Esophagus squamous epithelium (tissue), 5 donors: ENCODE measurements at regions of chr19 and their contacts with region 1.

Region 1: DNA sequence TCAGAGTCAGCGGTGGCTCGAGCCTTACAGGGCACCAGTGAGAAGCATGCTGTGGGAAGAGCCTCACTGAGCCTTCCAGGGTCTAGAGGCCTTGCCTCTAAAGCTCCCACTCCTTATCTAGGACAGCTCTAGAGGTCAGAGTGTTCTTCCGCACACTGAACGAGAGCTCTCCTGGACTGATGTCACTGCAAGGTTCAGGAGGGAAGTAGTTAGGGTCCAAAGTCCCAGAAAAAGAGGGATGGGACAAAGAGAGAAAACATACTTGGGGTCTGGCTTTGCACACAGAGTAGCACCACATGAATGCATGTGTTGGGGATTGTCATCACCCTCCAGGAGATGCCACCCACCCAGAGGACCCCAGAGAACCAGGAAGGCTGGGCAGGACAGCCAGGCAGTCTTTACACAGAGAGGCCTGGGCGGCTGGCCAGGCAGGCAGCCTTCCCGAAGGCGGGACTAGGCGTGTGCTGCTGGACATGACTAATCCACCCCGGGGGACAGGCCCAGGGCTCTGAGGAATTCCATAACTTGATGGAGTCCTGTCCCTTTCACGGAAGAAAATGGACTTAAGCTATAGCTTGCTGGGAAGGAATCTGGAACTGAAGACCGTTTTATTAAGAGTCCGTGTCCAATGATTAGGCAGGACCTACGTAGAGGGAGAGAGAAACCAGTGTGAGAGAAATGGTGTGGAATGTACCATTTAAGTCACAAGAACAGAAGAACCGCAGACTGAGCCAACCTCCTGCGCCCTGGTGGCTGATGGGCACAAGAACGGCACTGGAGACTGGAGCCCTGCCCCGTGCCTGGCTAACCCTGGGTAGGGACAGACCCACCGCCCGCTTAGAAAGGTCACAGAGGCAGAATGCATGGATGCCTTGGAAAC is 16.6 kb upstream of the EPHX3 start:
- DNase-seq: no peak
- H3K4me3 ChIP-seq: no peak overlapping the region
- H3K27ac ChIP-seq: peak overlapping the region; percentile 66 to 93 (median 88)
- H3K4me1 ChIP-seq: peaks cover 38 to 81% (median 61%) of the 10 kb centered on the region in 3 donors
- H3K27me3 ChIP-seq: no peaks in the 10 kb centered on the region
- CTCF ChIP-seq: no peak
- POLR2A ChIP-seq: no peak

Region 2: DNA sequence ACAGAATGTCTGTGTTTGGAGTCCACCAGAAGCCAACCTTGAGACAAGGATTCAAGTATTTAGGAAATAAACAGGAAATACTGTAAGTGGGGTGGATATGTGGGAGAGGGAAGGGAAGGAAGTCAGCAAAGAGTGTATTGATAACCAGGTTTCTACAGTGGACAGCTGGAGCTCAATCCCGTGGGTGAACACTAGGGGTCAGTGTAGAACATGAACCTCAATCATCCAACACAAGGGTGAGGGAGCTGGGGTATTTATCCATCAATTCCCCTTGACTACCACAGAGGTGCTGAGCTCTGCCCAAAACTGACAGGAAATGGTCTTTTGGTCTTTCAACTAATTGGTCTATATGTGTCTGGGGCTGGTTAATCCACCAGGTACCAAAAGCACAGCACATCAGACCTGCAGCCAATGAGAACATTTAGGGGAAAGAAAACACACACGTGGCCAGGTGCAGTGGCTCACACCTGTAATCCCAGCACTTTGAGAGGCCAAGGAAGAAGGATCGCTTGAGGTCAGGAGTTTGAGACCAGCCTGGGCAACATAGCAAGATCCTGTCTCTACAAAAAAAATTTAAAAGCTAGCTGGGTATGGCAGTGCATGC is 147.3 kb before region 1 on chr19:
- intact Hi-C with region 1: loop called (anchors 10 kb)
- DNase-seq: no peak
- H3K4me3 ChIP-seq: no peak overlapping the region
- H3K27ac ChIP-seq: no peak overlapping the region
- H3K4me1 ChIP-seq: peaks cover 2 to 17% (median 4%) of the 10 kb centered on the region in 3 donors
- H3K27me3 ChIP-seq: no peaks in the 10 kb centered on the region
- CTCF ChIP-seq: peak in 5 of 6 experiments; percentile 49 to 81 (median 66)
- POLR2A ChIP-seq: no peak

Region 3: DNA sequence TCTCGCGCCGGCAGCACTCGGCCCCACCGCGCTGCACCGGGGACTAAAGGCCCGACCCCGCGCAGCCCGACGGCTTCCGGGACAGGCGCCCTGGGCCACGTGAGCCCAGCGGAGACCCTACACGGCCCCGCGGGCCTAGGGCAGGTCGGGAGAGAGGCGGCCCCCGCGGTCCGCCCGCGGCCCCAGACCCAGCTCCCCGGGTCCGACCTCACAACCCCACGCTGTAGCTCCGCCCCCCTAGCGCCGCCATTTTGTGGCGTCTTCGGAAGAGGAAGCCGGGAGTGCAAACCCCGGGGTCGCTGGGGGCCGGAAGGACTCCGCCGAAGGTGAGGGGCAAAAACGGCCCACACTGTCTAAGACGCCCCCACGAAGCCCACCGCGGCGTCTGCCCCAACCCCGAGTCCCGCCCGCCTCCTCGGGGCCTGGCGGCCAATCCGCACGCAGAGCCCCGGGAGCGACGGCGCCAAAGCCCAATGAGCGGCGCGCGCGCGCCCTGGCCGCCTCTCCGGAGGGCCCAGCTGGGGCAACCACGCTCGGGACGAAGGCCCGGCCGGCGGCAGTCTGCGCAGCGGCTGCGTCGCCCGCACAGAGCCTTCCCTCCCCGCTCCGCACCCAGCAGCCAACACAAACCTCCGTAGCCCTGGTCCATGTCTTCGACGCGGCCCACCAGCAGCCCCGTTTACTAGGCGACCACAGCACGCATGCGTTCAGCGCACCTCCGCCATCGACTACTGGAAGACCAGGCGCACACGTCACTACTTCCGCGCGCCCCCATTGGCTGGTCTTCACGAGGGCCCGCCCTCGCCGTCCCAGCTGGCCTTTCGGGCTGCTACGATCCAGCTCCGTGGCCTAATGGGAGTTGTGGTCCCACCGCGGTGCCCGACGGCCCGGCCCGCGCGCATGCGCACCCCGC is 130.5 kb after region 1 on chr19 and contains the start of gene AKAP8:
- intact Hi-C with region 1: no loop called
- DNase-seq: peak; percentile 88
- H3K4me3 ChIP-seq: peak within 1 kb of the TSS; percentile 74 to 100 (median 96)
- H3K27ac ChIP-seq: peak within 1 kb of the TSS; percentile 94 to 99 (median 97)
- H3K4me1 ChIP-seq: peaks cover 23 to 52% (median 45%) of the 10 kb centered on the region in 3 donors
- H3K27me3 ChIP-seq: no peaks in the 10 kb centered on the region
- CTCF ChIP-seq: no peak
- POLR2A ChIP-seq: peak in 3 of 4 donors; percentile 58 to 82 (median 71)
- total RNA-seq, gene AKAP8: 17.4 to 32.4 (median 21.7) TPM

Region 4: DNA sequence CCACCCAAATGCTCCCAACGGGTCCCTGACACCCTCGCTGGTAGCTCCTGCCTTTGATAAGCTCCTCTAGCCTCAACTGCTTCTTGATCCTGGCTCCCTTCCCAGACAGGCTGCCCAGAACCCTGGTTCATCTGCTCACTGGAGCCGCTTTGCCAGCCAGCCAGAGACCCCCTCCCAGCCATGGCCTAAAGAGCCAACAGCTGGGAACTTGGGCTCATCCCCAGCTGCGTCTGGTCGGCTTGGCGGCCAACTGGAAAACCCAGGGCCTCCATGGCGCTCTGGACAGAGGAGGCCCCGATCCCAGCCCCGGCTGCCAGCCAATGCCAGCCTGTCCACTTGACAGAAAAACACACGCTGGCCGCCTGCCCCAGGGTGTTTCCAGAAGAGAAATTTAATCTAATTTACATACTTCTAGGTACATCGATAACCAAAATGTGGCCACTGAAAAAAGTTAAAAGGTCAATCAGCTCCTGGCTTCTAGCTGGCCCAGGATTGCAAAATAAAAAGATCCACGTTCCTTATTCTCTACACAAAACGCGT is 172.9 kb after region 1 on chr19:
- intact Hi-C with region 1: no loop called
- DNase-seq: no peak
- H3K4me3 ChIP-seq: no peak overlapping the region
- H3K27ac ChIP-seq: peak overlapping the region in 3 of 4 donors; percentile 45 to 77 (median 70)
- H3K4me1 ChIP-seq: peaks cover 17 to 47% (median 25%) of the 10 kb centered on the region in 3 donors
- H3K27me3 ChIP-seq: no peaks in the 10 kb centered on the region
- CTCF ChIP-seq: no peak
- POLR2A ChIP-seq: no peak